ENCODE measurements at regions of chr20 and their contacts with region 1.

Region 1: DNA sequence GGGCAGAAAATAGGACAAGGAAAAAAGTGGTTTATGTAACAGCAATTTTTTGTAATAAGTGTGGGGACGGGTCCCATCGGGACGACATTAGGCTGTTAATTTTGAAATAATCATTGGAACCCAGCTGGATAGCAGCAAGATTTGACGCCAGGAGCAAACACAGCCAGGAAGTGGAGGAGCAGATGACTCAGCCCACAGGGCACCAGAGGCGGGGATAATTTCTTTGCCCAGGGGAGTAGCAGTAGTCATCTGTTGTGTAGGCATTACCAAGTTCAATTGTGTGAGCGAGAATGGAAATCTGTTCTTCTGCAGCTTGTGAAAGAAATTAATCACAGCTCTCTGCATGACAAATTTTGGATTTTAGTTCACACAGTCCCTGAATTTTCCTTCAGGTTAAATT is 22.6 kb upstream of the RIN2 start:
- DNase-seq: peak; percentile 97
- ATAC-seq: peak; percentile 90
- H3K4me3 ChIP-seq: 0 out of 2 replicates have a peak overlapping the region, but pooled peaks have one; percentile 3
- H3K27ac ChIP-seq: peak overlapping the region; percentile 96
- H3K4me1 ChIP-seq: peaks cover 48% of the 10 kb centered on the region
- H3K27me3 ChIP-seq: no peaks in the 10 kb centered on the region
- CTCF ChIP-seq: no peak

Region 2: DNA sequence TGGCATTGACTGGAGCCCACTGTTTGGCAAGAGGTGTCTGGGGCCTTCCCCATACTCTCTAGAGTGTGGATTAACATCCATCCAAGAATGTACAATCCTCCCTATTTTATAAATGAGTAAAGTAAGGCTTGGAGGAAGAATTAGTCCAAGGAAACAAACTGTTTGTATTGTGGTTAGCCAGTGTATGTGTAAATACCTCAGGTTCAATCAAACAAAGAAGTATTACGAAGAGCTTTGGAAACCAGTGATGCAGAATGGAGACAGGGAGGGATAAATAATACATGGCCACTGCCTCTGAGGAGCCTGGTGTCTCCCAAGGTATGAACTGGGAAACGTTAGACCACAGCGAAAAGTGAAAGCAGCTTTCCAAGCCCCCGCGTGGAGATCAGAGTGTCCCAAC is 204.0 kb before region 1 on chr20:
- CTCF ChIA-PET with region 1: no interaction called
- POLR2A ChIA-PET with region 1: no interaction called
- intact Hi-C with region 1: no loop called
- DNase-seq: peak; percentile 17
- ATAC-seq: no peak
- H3K4me3 ChIP-seq: no peak overlapping the region
- H3K27ac ChIP-seq: no peak overlapping the region
- H3K4me1 ChIP-seq: no peaks in the 10 kb centered on the region
- H3K27me3 ChIP-seq: peaks cover 28% of the 10 kb centered on the region
- CTCF ChIP-seq: no peak

Region 3: GRCh38 chr20:19775360-19776253 is 40.2 kb after region 1 on chr20:
- CTCF ChIA-PET with region 1: no interaction called
- POLR2A ChIA-PET with region 1: interaction called, 4 read pairs
- intact Hi-C with region 1: loop called (anchors 2 kb)
- DNase-seq: peak; percentile 93
- ATAC-seq: peak; percentile 98
- H3K4me3 ChIP-seq: no peak overlapping the region
- H3K27ac ChIP-seq: peak overlapping the region; percentile 51
- H3K4me1 ChIP-seq: peaks cover 44% of the 10 kb centered on the region
- H3K27me3 ChIP-seq: no peaks in the 10 kb centered on the region
- CTCF ChIP-seq: no peak